ENCODE measurements at regions of chr18 and their contacts with region 1.

Region 1: GRCh38 chr18:43271593-43272432 is 5.5 kb downstream of the SYT4 start:
- DNase-seq: peak in 21 of 42 donors; percentile 5 to 76 (median 44)

Region 2: GRCh38 chr18:42114310-42114943 is 1157.4 kb before region 1 on chr18:
- intact Hi-C with region 1: loop called (anchors 10 kb)
- DNase-seq: peak; percentile 35 to 93 (median 73)

Region 3: GRCh38 chr18:43108882-43109281 is 162.9 kb before region 1 on chr18:
- intact Hi-C with region 1: no loop called
- DNase-seq: no peak